Activated T-helper 2 cell treated with anti-CD3 and anti-CD28 coated beads, Interferon-gamma antibody, Interleukin-2, Interleukin-4, amounts not matched to agents 10 μg/mL and 5 μg/mL and 100 μg/mL, durations not matched to agents 14 hours and 24 hours and 36 hours (primary cell): ENCODE measurements at regions of chr3 and their contacts with region 1.

Region 1: DNA sequence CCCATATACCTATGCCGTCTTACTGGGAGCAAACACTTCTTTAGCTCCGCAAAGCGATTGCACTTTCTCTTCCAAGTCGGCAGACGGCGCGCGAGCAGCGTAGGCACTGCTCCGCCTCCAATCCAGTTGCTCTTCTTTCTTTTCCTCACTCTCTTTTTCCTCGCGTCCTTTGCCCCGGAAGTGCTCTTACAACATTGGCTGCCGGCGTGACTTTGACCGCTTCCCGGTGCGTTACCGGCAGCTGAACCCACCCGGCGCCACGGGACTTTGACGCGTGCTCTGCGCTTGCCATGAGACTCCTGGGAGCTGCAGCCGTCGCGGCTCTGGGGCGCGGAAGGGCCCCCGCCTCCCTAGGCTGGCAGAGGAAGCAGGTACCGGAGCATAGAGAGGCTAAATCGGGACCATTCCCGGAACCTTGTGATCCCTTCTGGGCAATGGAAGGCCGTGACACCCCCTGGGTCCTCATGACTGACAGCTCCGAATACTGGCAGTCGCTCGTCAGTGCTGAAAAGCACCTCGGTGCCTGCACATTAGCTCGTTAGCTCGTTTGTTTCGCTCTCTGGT is at the start of gene GFM1:
- DNase-seq: peak; percentile 87
- H3K4me3 Mint-ChIP-seq: peak within 1 kb of the TSS; percentile 96
- H3K27ac Mint-ChIP-seq: peak within 1 kb of the TSS; percentile 93
- H3K4me1 Mint-ChIP-seq: peaks cover 27% of the 10 kb centered on the region
- H3K27me3 Mint-ChIP-seq: no peaks in the 10 kb centered on the region
- total RNA-seq, gene GFM1: 59.1 and 60.9 TPM in 2 replicates

Region 2: GRCh38 chr3:158539414-158540014 is 104.9 kb before region 1 on chr3:
- intact Hi-C with region 1: loop called (anchors 5 kb)
- DNase-seq: no peak
- H3K4me3 Mint-ChIP-seq: no peak overlapping the region
- H3K27ac Mint-ChIP-seq: no peak overlapping the region
- H3K4me1 Mint-ChIP-seq: no peaks in the 10 kb centered on the region
- H3K27me3 Mint-ChIP-seq: no peaks in the 10 kb centered on the region

Region 3: DNA sequence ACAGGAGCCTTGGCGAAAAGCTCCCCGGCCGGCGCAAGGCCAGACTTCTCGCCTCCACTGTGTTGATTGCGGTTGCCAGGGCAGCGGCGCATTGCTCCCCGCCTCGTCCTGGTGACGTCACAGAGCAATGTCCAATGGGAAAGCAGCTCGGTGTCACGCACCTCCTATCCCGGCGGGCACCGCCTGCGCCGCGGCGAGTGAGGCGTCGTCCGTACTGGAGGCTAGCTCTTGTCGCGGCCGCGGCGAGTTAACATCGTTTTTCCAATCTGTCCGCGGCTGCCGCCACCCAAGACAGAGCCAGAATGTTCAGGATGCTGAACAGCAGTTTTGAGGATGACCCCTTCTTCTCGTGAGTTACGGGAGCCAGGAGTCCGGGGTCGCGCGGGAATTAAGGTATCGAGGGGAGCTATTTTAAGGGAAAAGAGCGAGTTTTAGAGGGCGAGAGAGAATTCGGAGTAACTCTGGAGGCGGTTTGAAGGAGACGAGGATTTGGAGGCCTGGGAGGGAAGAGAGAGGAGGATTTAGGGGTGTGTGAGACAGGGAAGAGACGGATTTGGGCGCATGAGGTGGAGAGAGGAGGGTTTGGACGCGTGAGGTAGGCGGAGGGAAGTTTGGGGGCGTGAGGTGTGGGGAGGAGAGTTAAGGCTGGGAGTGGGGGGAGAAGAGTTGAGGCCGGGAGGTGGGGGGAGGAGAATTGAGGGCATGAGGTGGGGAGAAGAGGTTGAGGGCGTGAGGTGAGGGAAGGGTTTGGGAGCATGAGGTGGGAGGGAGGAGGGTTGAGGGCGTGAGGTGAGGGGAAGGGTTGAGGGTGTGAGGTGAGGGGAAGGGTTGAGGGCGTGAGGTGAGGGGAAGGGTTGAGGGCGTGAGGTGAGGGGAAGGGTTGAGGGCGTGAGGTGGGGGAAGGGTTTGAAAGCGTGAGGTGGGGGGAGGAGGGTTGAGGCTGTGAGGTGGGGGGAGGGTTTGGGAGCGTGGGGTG is 73.1 kb before region 1 on chr3 and contains the start of gene MLF1:
- intact Hi-C with region 1: loop called (anchors 5 kb)
- DNase-seq: peak; percentile 81
- H3K4me3 Mint-ChIP-seq: peak within 1 kb of the TSS; percentile 85
- H3K27ac Mint-ChIP-seq: peak within 1 kb of the TSS; percentile 72
- H3K4me1 Mint-ChIP-seq: peaks cover 11% of the 10 kb centered on the region
- H3K27me3 Mint-ChIP-seq: peaks cover 23% of the 10 kb centered on the region
- total RNA-seq, gene MLF1: 2.2 and 3.4 TPM in 2 replicates

Region 4: GRCh38 chr3:158801696-158802408 is 157.4 kb after region 1 on chr3 and contains the start of gene MFSD1:
- intact Hi-C with region 1: loop called (anchors 5 kb)
- DNase-seq: peak; percentile 86
- H3K4me3 Mint-ChIP-seq: peak within 1 kb of the TSS; percentile 87
- H3K27ac Mint-ChIP-seq: peak within 1 kb of the TSS; percentile 82
- H3K4me1 Mint-ChIP-seq: peaks cover 16% of the 10 kb centered on the region
- H3K27me3 Mint-ChIP-seq: peaks cover 13% of the 10 kb centered on the region
- total RNA-seq, gene MFSD1: 20.2 and 24.1 TPM in 2 replicates